A549 (cell line): ENCODE measurements at regions of chr1 and their contacts with region 1.

Region 1: DNA sequence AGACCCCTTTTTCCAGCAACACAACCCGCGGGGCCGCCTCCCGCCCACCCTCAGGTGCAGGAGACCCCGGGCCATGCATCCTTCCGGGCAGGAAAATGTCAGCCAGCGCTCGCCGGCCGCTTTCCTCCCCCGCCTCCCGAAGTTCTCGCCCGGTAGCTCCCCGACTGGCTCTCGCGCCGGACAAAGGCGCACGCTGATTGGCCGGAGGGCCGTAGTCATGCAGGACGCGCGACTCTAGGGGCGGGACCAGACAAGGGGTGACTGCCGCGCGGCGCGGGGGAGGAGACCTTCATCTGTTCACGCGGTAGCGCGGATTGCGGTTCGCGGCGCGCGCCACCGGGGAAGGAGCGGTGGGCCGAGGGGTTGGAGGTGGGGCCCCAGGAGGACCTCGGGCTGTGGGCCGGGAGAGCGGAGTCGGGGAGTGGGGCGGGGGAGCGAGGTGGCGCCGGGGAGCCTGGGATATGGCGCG is at the start of gene FLVCR1:
- DNase-seq: peak; percentile 95 to 97
- ATAC-seq: peak; percentile 93 to 97
- H3K4me3 ChIP-seq: peak within 1 kb of the TSS; percentile 80
- H3K27ac ChIP-seq: peak within 1 kb of the TSS; percentile 86 to 97
- H3K4me1 ChIP-seq: peaks cover 54% of the 10 kb centered on the region
- CTCF ChIP-seq: no peak
- EP300 ChIP-seq: no peak
- POLR2A ChIP-seq: peak; percentile 81
- RAD21 ChIP-seq: no peak
- polyA plus RNA-seq, gene FLVCR1: 13.7 and 15.4 TPM in 2 replicates

Region 2: GRCh38 chr1:212691561-212692071 is 166.4 kb before region 1 on chr1:
- CTCF ChIA-PET with region 1: no interaction called
- POLR2A ChIA-PET with region 1: no interaction called
- DNase-seq: no peak
- ATAC-seq: no peak
- H3K4me3 ChIP-seq: no peak overlapping the region
- H3K27ac ChIP-seq: no peak overlapping the region
- H3K4me1 ChIP-seq: no peaks in the 10 kb centered on the region
- CTCF ChIP-seq: no peak
- EP300 ChIP-seq: no peak
- POLR2A ChIP-seq: no peak
- RAD21 ChIP-seq: no peak

Region 3: GRCh38 chr1:212791676-212792395 is 66.2 kb before region 1 on chr1 and contains the starts of genes NSL1 and TATDN3:
- CTCF ChIA-PET with region 1: interaction called, 3 read pairs
- POLR2A ChIA-PET with region 1: interaction called, 12 read pairs
- DNase-seq: peak; percentile 61 to 94
- ATAC-seq: peak; percentile 95 to 96
- H3K4me3 ChIP-seq: peak within 1 kb of the TSS; percentile 70
- H3K27ac ChIP-seq: peak within 1 kb of the TSS; percentile 87 to 95
- H3K4me1 ChIP-seq: peaks cover 23% of the 10 kb centered on the region
- CTCF ChIP-seq: 0 out of 3 replicates have a peak, but pooled peaks have one; percentile 11
- EP300 ChIP-seq: no peak
- POLR2A ChIP-seq: peak; percentile 72
- RAD21 ChIP-seq: peak in 1 of 2 experiments; percentile 42; a peak in 2 of 5 replicates
- polyA plus RNA-seq, gene NSL1: 47.9 and 56.9 TPM in 2 replicates
- polyA plus RNA-seq, gene TATDN3: 20.3 and 22.6 TPM in 2 replicates

Region 4: GRCh38 chr1:212827824-212828278 is 30.2 kb before region 1 on chr1:
- CTCF ChIA-PET with region 1: no interaction called
- POLR2A ChIA-PET with region 1: interaction called, 10 read pairs
- DNase-seq: peak in 1 of 2 experiments; percentile 26
- ATAC-seq: peak; percentile 19 to 52; a peak in 3 of 6 replicates
- H3K4me3 ChIP-seq: no peak overlapping the region
- H3K27ac ChIP-seq: 0 out of 6 replicates have a peak overlapping the region, but pooled peaks of 1 of the 2 experiments have one; percentile 11
- H3K4me1 ChIP-seq: peaks cover 11% of the 10 kb centered on the region
- CTCF ChIP-seq: no peak
- EP300 ChIP-seq: no peak
- POLR2A ChIP-seq: no peak
- RAD21 ChIP-seq: no peak

Region 5: DNA sequence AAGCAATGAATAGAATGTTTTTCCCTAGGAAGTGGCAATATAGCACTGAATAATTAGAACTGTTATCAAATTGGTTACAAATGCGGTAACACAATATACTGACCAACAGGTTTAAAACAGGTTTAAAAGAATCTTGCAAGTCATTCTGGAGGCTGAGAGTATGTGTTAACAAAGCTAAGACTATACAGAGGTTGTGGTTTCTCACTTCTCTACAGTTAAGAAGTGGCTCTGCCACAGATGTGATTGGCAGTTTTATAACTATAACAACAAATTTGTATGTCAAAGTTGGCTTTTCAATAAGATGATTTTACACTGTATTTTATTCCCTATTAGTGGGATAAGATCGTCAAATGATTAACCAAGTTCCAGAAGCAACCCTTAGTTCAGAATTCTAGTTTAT is 150.5 kb after region 1 on chr1:
- CTCF ChIA-PET with region 1: no interaction called
- POLR2A ChIA-PET with region 1: no interaction called
- DNase-seq: no peak
- ATAC-seq: no peak
- H3K4me3 ChIP-seq: no peak overlapping the region
- H3K27ac ChIP-seq: no peak overlapping the region
- H3K4me1 ChIP-seq: peaks cover under 1% of the 10 kb centered on the region; the same call in 2 of the 3 replicates
- CTCF ChIP-seq: no peak
- EP300 ChIP-seq: no peak
- POLR2A ChIP-seq: no peak
- RAD21 ChIP-seq: no peak

Region 6: DNA sequence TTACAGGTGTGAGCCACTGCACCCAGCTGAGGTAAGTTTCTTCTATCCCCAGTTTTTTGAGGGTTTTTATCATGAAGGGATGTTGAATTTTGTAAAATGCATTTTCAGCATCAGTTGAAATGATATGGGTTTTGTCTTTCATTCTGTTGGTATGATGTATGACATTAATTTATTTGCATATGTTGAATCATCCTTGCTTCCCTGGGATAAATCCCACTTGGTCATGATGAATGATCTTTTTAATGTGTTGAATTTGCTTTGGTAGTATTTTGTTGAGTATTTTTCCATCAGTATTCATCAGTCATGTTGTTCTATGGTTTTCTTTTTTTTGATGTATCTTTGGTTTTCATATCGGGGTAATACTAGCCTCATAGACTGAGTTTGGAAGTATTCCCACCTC is 334.0 kb after region 1 on chr1:
- CTCF ChIA-PET with region 1: no interaction called
- POLR2A ChIA-PET with region 1: no interaction called
- DNase-seq: no peak
- ATAC-seq: no peak
- H3K4me3 ChIP-seq: no peak overlapping the region
- H3K27ac ChIP-seq: no peak overlapping the region
- H3K4me1 ChIP-seq: no peaks in the 10 kb centered on the region
- CTCF ChIP-seq: no peak
- EP300 ChIP-seq: no peak
- POLR2A ChIP-seq: no peak
- RAD21 ChIP-seq: no peak